ENCODE measurements at regions of chr5 and their contacts with region 1.

Region 1: DNA sequence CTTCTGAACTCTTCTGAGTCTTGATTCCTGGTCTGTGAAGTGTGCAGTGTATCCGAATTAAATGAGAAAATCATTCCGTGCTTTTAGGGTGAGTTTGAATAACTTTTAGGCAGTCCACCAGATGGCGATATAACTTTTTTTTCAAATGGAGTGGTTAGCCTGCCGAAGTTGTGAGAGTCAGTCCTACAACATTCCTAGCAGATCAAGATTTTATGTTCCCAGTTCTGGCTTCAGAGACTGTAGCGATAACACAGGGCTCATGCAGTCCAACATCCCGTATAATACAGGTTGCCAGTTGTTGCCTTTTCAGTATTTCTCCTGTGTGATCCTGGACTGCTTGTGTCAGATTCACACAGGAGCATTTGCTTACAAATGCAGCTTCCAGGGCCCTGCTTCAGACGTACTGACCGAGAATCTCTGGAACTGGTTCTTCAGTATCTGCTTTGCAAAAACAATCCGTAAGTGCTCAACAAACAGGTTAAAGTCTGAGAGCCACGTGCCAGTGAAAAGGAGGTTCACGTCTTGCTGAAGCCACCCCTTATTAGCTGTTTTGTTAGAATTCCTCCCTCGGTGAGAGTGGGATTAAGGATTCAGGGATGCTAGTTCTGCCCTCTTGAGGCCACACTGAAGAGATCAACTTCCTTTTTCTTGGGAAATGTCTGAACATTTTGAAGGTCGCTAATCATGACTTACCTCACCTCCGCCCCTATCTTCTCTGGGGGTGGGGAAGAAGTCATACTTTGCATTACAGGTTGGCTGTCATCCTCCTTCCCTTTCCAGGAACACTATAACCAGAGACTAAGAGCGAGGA is 22.8 kb downstream of the SMIM3 start:
- DNase-seq: no peak
- ATAC-seq: peak; percentile 64
- H3K4me3 Mint-ChIP-seq: no peak overlapping the region
- H3K27ac Mint-ChIP-seq: no peak overlapping the region
- H3K4me1 Mint-ChIP-seq: peaks cover 15% of the 10 kb centered on the region
- H3K27me3 Mint-ChIP-seq: peaks cover 2% of the 10 kb centered on the region
- CTCF ChIP-seq: peak; percentile 81

Region 2: DNA sequence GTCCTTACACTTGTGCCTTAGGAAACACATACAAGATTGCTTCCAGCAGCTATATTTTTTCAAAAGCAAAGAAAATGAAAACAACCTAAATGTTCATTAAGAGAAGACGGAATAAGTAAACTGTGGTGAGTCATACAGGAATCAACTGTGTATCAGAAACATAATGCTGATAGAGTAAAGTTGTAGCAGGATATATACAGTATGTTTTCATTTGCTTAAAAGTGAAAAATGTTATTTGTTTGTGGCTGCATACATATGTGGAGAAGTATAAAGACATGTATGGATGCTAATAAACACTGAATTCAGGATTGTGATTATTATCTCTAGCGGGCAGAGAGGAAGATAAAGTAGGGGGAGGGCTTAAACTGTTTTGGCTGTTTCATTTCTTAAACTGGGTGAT is 50.9 kb before region 1 on chr5:
- CTCF ChIA-PET with region 1: no interaction called
- POLR2A ChIA-PET with region 1: no interaction called
- intact Hi-C with region 1: no loop called
- DNase-seq: no peak
- ATAC-seq: no peak
- H3K4me3 Mint-ChIP-seq: no peak overlapping the region
- H3K27ac Mint-ChIP-seq: peak overlapping the region; percentile 82
- H3K4me1 Mint-ChIP-seq: peaks cover 46% of the 10 kb centered on the region
- H3K27me3 Mint-ChIP-seq: no peaks in the 10 kb centered on the region
- CTCF ChIP-seq: no peak

Region 3: DNA sequence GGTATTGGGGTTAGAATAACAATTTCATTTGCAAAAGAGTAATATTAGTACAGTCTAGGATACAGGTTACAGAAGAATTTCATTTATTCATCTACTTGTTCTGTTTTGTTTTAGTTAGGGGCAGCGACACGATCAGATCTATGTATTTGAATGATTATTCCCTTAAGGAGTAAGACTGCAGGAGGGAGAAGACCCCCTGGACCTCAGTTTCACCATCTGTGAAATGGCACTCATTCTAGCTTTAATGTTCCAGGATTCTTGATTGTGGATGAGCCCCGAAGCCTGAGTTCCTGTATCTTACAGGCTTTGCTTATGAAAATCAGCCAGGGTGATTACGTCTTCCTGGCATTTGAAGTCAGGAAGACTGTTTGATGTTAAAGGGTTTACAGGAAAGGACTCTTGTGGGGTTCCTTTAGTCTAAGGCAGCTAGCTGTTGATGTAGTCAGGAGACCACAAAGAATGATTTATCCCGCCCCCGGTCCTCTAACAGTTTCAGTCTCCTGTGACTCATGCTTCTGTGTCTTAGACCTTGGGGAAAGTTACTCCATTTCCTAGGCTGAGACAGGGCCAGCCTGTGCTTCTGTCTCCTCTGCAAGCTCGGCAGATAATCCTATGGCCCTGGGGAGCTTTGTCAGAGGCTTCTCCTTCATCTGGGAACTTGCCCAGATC is 11.2 kb before region 1 on chr5:
- CTCF ChIA-PET with region 1: interaction called, 11 read pairs
- POLR2A ChIA-PET with region 1: interaction called, 4 read pairs
- intact Hi-C with region 1: no loop called
- DNase-seq: peak; percentile 92
- ATAC-seq: peak; percentile 98
- H3K4me3 Mint-ChIP-seq: peak overlapping the region; percentile 71
- H3K27ac Mint-ChIP-seq: peak overlapping the region; percentile 92
- H3K4me1 Mint-ChIP-seq: peaks cover 57% of the 10 kb centered on the region
- H3K27me3 Mint-ChIP-seq: no peaks in the 10 kb centered on the region
- CTCF ChIP-seq: no peak